ENCODE measurements at regions of chr13 and their contacts with region 1.

Region 1: DNA sequence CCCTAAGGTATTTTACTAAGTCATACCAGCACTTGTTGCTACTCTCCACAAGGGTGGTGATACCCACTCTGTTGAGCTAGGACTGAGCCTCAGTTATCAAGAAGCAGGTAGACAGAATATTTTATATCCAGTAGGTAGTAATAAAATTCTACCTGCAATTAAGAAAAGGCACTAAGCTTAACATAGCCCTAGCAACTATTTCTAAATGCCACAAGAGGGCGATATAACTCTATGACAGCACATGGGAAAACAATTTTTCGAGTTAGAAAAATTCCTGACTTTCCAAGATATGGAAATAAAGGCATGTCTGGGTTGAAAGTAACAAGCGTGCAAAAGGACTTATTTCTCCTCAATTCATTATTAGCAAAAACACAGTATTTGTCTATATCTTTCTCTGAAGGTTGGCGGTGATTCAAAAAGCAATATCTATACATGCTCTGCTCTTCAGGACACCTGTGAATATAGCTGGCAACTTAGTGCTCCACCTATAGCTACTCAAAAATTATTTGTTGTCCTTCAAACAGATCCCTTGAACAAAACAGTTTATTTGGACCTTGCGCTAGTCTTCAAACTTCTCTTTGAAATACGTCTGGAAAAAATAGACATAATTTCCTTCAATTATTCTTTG is 14.7 kb downstream of the CCDC169 start:
- DNase-seq: no peak
- H3K4me3 ChIP-seq: no peak overlapping the region
- H3K27ac ChIP-seq: no peak overlapping the region
- H3K4me1 ChIP-seq: peaks cover 0 to 9% (median 0%) of the 10 kb centered on the region in 4 donors
- H3K27me3 ChIP-seq: no peaks in the 10 kb centered on the region
- CTCF ChIP-seq: peak; percentile 76 to 86 (median 86)
- EP300 ChIP-seq: no peak
- POLR2A ChIP-seq: no peak

Region 2: DNA sequence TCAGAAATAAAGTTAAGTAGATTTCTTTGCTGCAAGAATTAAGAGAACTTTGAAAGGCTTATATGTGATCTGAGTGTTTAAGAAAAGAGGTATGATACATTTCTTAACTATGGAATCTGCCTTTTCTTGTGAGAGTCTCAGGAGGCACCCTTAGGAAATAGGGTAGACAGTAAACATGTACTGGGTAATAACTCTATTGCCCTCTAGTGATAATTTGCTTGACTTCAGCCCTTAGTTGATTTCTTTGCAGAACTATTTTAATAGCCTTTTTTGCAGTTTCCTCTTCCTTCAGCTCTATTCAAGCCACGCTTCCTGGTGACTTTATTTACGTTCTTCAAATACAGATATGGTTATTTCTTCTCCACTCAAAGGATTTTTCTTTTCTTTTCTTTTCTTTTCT is 112.3 kb after region 1 on chr13:
- intact Hi-C with region 1: loop called (anchors 5 kb)
- DNase-seq: no peak
- H3K4me3 ChIP-seq: no peak overlapping the region
- H3K27ac ChIP-seq: no peak overlapping the region
- H3K4me1 ChIP-seq: no peaks in the 10 kb centered on the region
- H3K27me3 ChIP-seq: no peaks in the 10 kb centered on the region
- CTCF ChIP-seq: peak; percentile 52 to 58 (median 57)
- EP300 ChIP-seq: no peak
- POLR2A ChIP-seq: no peak